A673 (cell line): ENCODE measurements at regions of chr11 and their contacts with region 1.

Region 1: DNA sequence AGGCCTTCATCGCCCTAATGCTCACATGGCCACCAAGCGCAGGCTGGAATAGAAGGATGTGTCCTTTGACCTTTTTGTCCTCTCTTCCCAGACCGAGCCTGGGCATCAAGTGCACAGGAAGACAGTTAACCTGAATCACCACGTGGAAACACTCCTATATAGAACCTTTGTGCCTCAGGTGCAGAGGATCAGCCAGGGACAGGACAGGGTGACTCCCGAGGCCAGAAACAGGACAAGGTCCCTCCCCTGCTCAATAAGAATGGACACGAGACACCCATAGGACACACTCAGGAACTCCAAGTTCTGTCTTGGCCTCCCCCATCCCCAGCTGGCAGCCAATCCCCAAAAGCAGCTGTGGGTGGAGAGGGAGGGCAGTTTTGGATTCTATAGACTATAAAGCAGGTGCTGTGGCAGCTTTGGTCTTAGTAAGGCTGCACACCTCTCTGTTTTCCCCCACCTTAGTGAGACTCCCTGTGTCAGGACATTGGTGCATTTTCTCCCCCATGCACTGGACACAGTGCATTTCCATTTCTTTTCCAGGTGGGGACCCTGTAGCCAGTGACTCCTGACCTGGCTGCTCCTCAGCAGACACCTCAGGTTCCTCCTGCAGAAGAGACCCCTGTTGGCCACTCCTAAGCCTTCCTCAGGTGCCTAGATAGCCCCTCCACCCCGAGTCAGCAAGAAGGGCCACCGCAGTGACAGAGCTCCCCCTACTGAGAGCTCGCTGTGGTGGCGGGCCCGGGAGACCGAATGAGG is 43.6 kb upstream of the POU2AF1 start:
- DNase-seq: peak; percentile 82
- H3K4me3 ChIP-seq: no peak overlapping the region
- H3K27ac ChIP-seq: no peak overlapping the region
- H3K4me1 ChIP-seq: peaks cover 15% of the 10 kb centered on the region
- H3K27me3 ChIP-seq: no peaks in the 10 kb centered on the region
- CTCF ChIP-seq: peak; percentile 99

Region 2: DNA sequence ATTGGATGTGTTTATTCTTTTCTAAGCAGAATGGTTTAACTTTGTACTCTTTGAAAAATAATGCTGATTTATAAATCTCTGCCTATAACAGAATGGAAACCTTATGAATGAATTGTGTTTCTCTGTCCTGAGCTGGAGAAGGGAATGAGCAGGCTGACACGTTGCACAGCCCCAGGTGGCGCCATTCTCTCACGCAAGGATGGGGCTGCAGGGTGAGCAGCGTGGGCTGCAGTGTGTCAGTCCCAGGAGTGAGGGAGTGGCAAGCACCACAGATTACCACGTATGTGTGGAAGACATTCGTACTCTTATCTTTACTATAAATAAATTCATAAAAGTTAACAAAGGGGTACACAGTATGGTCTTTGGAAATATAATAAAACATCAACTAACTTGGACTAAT is 959.5 kb before region 1 on chr11:
- CTCF ChIA-PET with region 1: no interaction called
- POLR2A ChIA-PET with region 1: no interaction called
- intact Hi-C with region 1: loop called (anchors 10 kb)
- DNase-seq: peak; percentile 87
- H3K4me3 ChIP-seq: no peak overlapping the region
- H3K27ac ChIP-seq: no peak overlapping the region
- H3K4me1 ChIP-seq: peaks cover 6% of the 10 kb centered on the region
- H3K27me3 ChIP-seq: no peaks in the 10 kb centered on the region
- CTCF ChIP-seq: peak; percentile 89

Region 3: GRCh38 chr11:111378861-111379601 is 43.6 kb before region 1 on chr11 and contains the start of gene POU2AF1:
- CTCF ChIA-PET with region 1: no interaction called
- POLR2A ChIA-PET with region 1: no interaction called
- intact Hi-C with region 1: no loop called
- DNase-seq: no peak
- H3K4me3 ChIP-seq: no peak within 1 kb of the TSS
- H3K27ac ChIP-seq: no peak within 1 kb of the TSS
- H3K4me1 ChIP-seq: peaks cover 8% of the 10 kb centered on the region
- H3K27me3 ChIP-seq: no peaks in the 10 kb centered on the region
- CTCF ChIP-seq: no peak
- total RNA-seq, gene POU2AF1: not detected in 2 replicates

Region 4: GRCh38 chr11:111526501-111526900 is 103.8 kb after region 1 on chr11:
- CTCF ChIA-PET with region 1: no interaction called
- POLR2A ChIA-PET with region 1: no interaction called
- intact Hi-C with region 1: no loop called
- DNase-seq: peak; percentile 27
- H3K4me3 ChIP-seq: no peak overlapping the region
- H3K27ac ChIP-seq: no peak overlapping the region
- H3K4me1 ChIP-seq: no peaks in the 10 kb centered on the region
- H3K27me3 ChIP-seq: no peaks in the 10 kb centered on the region
- CTCF ChIP-seq: no peak